ENCODE measurements at regions of chr6 and their contacts with region 1.

Region 1: DNA sequence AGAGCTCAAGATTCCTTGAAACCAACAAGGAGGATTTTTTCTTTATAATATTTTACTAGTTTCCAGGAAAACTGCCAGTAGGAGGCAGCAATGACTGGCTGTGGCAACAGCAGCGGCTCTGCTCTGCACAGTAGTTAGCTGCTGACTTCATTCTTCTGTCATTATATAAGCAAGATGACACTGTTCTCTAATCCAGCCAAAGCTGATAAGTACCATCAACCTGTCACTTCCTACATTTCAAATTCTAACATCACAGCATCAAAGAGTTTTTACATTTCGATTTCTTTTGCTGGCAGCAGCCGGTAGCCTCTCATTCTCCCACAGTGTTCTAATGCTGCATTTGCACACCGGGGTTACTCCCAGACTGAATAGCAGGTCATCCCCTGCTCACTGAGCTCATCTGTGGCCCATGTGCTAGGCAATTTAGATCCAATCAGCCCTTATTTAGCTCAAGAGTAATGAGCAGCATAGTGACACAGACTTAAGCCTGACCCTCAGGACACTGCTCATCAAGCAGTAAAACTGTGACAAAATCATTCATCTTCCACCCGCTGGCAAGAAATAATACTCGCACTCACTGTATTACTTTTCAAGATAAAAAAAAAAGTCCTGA is 67.8 kb downstream of the MMS22L start:
- DNase-seq: peak; percentile 48
- H3K4me3 ChIP-seq: peak overlapping the region in 1 of 2 experiments; percentile 25; a peak in 2 of 4 replicates
- H3K27ac ChIP-seq: peak overlapping the region; percentile 8 to 81; a peak in 3 of 4 replicates
- H3K4me1 ChIP-seq: peaks cover 3 to 6% of the 10 kb centered on the region in 2 experiments; a peak in 3 of 4 replicates
- H3K27me3 ChIP-seq: no peaks in the 10 kb centered on the region
- CTCF ChIP-seq: peak; percentile 79
- EP300 ChIP-seq: peak in 1 of 2 experiments; percentile 53; a peak in 1 of 4 replicates
- RAD21 ChIP-seq: peak; percentile 83

Region 2: GRCh38 chr6:96923871-96924493 is 291.3 kb before region 1 on chr6:
- CTCF ChIA-PET with region 1: no interaction called
- POLR2A ChIA-PET with region 1: no interaction called
- DNase-seq: peak; percentile 88
- H3K4me3 ChIP-seq: peak overlapping the region; percentile 56 to 59; a peak in 3 of 4 replicates
- H3K27ac ChIP-seq: peak overlapping the region in 1 of 2 experiments; percentile 39; a peak in 2 of 4 replicates
- H3K4me1 ChIP-seq: peaks cover 0 to 9% of the 10 kb centered on the region in 2 experiments; a peak in 2 of 4 replicates
- H3K27me3 ChIP-seq: peaks cover 14% of the 10 kb centered on the region; the same call in 1 of the 2 replicates
- CTCF ChIP-seq: no peak
- EP300 ChIP-seq: no peak
- RAD21 ChIP-seq: no peak

Region 3: GRCh38 chr6:97186416-97186999 is 28.8 kb before region 1 on chr6:
- CTCF ChIA-PET with region 1: interaction called, 25 read pairs
- POLR2A ChIA-PET with region 1: no interaction called
- DNase-seq: peak; percentile 40
- H3K4me3 ChIP-seq: no peak overlapping the region; a peak in 1 of 4 replicates
- H3K27ac ChIP-seq: no peak overlapping the region
- H3K4me1 ChIP-seq: peaks cover 5 to 18% of the 10 kb centered on the region in 2 experiments; a peak in 3 of 4 replicates
- H3K27me3 ChIP-seq: no peaks in the 10 kb centered on the region
- CTCF ChIP-seq: peak; percentile 98
- EP300 ChIP-seq: no peak
- RAD21 ChIP-seq: peak; percentile 97

Region 4: DNA sequence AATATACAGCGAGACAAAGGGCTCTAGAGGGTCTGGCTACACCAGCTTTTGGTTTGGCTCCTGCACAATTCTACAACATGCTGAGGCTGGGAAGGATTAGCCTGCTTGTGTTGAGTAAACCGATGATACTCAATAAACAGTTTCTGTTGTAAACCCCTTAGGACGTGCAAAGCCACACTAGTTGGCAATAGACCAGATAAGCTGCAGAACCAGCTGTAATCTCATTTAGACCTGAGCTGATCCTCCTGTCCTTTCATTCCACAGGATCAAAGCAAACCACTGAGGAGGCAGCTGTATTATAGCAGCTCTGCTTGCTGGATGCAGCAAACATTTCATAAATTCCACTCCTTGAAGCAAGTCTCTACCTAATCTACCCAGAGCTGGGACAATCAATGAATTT is 11.9 kb before region 1 on chr6:
- CTCF ChIA-PET with region 1: interaction called, 63 read pairs
- POLR2A ChIA-PET with region 1: interaction called, 3 read pairs
- DNase-seq: peak; percentile 39
- H3K4me3 ChIP-seq: no peak overlapping the region
- H3K27ac ChIP-seq: peak overlapping the region in 1 of 2 experiments; percentile 43; a peak in 2 of 4 replicates
- H3K4me1 ChIP-seq: peaks cover 8 to 24% of the 10 kb centered on the region in 2 experiments; a peak in 3 of 4 replicates
- H3K27me3 ChIP-seq: no peaks in the 10 kb centered on the region
- CTCF ChIP-seq: no peak
- EP300 ChIP-seq: peak in 1 of 2 experiments; percentile 27; a peak in 1 of 4 replicates
- RAD21 ChIP-seq: no peak

Region 5: DNA sequence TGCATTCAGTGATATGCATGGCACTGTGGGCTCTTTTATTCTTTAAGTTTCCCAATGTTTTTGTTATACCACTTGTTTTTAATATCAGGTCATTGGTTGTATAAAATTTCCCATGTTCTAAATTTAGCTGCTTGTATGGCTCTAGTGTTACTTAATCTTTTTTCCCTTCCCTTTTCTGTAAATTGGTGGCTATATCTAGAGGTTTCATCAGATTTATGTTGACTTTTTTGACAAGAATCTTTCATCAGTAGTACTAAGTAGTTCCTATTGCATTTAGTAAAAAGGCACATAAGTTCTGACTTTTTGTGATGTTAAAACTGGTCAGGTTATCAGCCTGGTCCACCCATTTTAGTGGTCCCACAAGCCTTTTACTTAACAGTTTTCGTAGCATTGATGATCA is 16.6 kb after region 1 on chr6:
- CTCF ChIA-PET with region 1: interaction called, 29 read pairs
- POLR2A ChIA-PET with region 1: no interaction called
- DNase-seq: no peak
- H3K4me3 ChIP-seq: no peak overlapping the region
- H3K27ac ChIP-seq: no peak overlapping the region
- H3K4me1 ChIP-seq: 0 out of 4 replicates have a peak, but pooled peaks cover 0 to 7% of the 10 kb centered on the region in 2 experiments
- H3K27me3 ChIP-seq: no peaks in the 10 kb centered on the region
- CTCF ChIP-seq: no peak
- EP300 ChIP-seq: no peak
- RAD21 ChIP-seq: no peak

Region 6: DNA sequence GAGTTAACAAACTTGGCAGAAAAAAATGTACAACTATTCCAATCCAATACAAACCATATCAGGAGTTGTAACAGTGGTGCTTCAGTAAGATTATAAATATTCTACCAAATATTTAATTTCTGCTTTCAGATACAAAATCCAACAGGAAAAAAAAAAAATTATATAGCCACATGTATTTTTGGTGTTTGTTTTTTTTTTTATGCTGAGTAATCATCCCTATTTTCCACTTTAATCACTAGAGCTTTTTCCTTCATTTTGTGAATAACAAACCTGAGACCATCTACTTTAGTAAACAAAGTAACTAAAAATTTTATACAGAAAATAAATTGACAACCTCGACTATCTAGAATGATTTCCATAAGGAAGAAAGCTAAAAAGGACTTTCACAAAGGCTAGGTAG is 31.6 kb after region 1 on chr6:
- CTCF ChIA-PET with region 1: interaction called, 11 read pairs
- POLR2A ChIA-PET with region 1: no interaction called
- DNase-seq: no peak
- H3K4me3 ChIP-seq: no peak overlapping the region
- H3K27ac ChIP-seq: no peak overlapping the region
- H3K4me1 ChIP-seq: no peaks in the 10 kb centered on the region; a peak in 1 of 4 replicates
- H3K27me3 ChIP-seq: no peaks in the 10 kb centered on the region
- CTCF ChIP-seq: no peak
- EP300 ChIP-seq: no peak
- RAD21 ChIP-seq: no peak

Region 7: DNA sequence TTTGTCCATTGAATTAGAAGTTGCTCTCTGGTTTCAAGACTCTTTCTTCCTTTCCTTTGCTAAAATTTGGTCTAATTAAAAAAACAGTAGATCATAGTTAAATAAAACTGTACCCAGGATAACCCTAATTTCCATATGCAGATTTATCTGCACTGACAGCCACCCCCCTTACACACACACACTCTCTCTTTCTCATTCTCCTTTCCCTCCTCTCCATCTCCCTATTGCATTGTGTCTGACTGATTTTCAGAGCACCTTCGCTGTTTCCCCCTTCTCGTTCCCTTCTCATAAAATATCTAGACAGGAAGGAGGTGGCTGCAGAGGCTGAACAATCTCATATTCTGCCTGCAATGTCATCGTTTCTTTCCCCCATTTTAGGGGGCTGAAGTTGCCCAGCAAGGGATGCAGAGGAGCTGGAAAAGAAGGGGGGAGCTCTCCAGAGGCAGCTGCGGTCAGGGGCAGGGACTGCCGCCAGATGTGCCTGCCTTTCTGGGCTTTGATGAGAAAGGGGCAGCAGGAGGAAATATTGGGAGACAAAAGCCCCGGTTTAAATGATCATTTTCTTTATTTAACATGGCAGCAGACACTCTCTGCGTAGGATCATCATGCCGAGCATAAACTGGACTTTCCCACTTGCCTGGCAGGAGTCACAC is 90.3 kb after region 1 on chr6:
- CTCF ChIA-PET with region 1: interaction called, 11 read pairs
- POLR2A ChIA-PET with region 1: no interaction called
- DNase-seq: peak; percentile 17
- H3K4me3 ChIP-seq: no peak overlapping the region
- H3K27ac ChIP-seq: no peak overlapping the region
- H3K4me1 ChIP-seq: peaks cover 0 to 8% of the 10 kb centered on the region in 2 experiments; a peak in 2 of 4 replicates
- H3K27me3 ChIP-seq: no peaks in the 10 kb centered on the region
- CTCF ChIP-seq: no peak
- EP300 ChIP-seq: no peak
- RAD21 ChIP-seq: no peak

Region 8: DNA sequence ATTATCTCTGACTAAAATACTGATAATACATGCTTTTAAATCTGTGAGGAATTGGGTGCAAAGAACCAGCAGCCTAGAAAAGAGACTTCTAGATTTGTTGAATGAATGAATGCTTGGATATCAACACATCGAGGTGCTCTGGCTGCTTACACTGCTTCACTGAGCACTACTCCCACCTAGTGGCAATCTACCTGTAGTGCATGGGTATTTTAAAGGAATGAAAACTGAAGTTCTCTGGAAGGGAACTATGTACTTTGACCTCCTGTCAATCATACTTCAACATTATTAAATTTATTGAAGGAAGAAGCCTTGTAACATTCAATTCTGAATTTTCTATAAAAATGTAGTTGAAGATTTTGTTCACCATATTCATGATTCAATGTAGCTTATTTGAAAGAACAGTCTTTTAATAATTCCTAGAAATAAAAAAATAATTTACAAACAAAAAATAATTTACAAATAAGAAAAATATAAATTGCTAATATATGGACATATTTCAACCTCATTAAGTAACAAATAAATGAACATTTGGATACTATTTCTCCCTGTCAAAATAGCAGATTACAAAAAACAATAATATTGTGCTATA is 179.0 kb after region 1 on chr6:
- CTCF ChIA-PET with region 1: interaction called, 45 read pairs
- POLR2A ChIA-PET with region 1: interaction called, 4 read pairs
- DNase-seq: peak; percentile 52
- H3K4me3 ChIP-seq: peak overlapping the region in 1 of 2 experiments; percentile 41; a peak in 1 of 4 replicates
- H3K27ac ChIP-seq: no peak overlapping the region
- H3K4me1 ChIP-seq: no peaks in the 10 kb centered on the region; a peak in 1 of 4 replicates
- H3K27me3 ChIP-seq: no peaks in the 10 kb centered on the region
- CTCF ChIP-seq: peak; percentile 96
- EP300 ChIP-seq: no peak
- RAD21 ChIP-seq: peak; percentile 97